GM12878 (cell line): ENCODE measurements at regions of chr10 and their contacts with region 1.

Region 1: GRCh38 chr10:50577681-50578350 is 45.9 kb downstream of the SGMS1 start:
- DNase-seq: no peak
- ATAC-seq: peak; percentile 52
- H3K4me3 ChIP-seq: no peak overlapping the region
- H3K27ac ChIP-seq: no peak overlapping the region
- H3K4me1 ChIP-seq: no peaks in the 10 kb centered on the region
- H3K27me3 ChIP-seq: no peaks in the 10 kb centered on the region
- CTCF ChIP-seq: no peak
- EP300 ChIP-seq: no peak
- POLR2A ChIP-seq: no peak
- RAD21 ChIP-seq: no peak

Region 2: GRCh38 chr10:50426485-50426884 is 151.3 kb before region 1 on chr10:
- CTCF ChIA-PET with region 1: no interaction called
- POLR2A ChIA-PET with region 1: no interaction called
- RAD21 ChIA-PET with region 1: no interaction called
- SMC1A ChIA-PET with region 1: no interaction called
- in situ Hi-C with region 1: no loop called
- intact Hi-C with region 1: no loop called
- DNase-seq: peak; percentile 56
- ATAC-seq: peak; percentile 81
- H3K4me3 ChIP-seq: no peak overlapping the region
- H3K27ac ChIP-seq: no peak overlapping the region
- H3K4me1 ChIP-seq: peaks cover 23% of the 10 kb centered on the region
- H3K27me3 ChIP-seq: no peaks in the 10 kb centered on the region
- CTCF ChIP-seq: no peak
- EP300 ChIP-seq: no peak
- POLR2A ChIP-seq: no peak
- RAD21 ChIP-seq: no peak

Region 3: GRCh38 chr10:50567384-50567783 is 10.4 kb before region 1 on chr10:
- CTCF ChIA-PET with region 1: interaction called, 3 read pairs
- POLR2A ChIA-PET with region 1: interaction called, 3 read pairs
- RAD21 ChIA-PET with region 1: no interaction called
- SMC1A ChIA-PET with region 1: interaction called, 19 read pairs
- in situ Hi-C with region 1: no loop called
- intact Hi-C with region 1: no loop called
- DNase-seq: no peak
- ATAC-seq: no peak
- H3K4me3 ChIP-seq: no peak overlapping the region
- H3K27ac ChIP-seq: no peak overlapping the region
- H3K4me1 ChIP-seq: no peaks in the 10 kb centered on the region
- H3K27me3 ChIP-seq: no peaks in the 10 kb centered on the region
- CTCF ChIP-seq: no peak
- EP300 ChIP-seq: no peak
- POLR2A ChIP-seq: no peak
- RAD21 ChIP-seq: no peak

Region 4: GRCh38 chr10:50832171-50832751 is 254.4 kb after region 1 on chr10:
- CTCF ChIA-PET with region 1: no interaction called
- POLR2A ChIA-PET with region 1: no interaction called
- RAD21 ChIA-PET with region 1: no interaction called
- SMC1A ChIA-PET with region 1: no interaction called
- in situ Hi-C with region 1: no loop called
- intact Hi-C with region 1: no loop called
- DNase-seq: no peak
- ATAC-seq: no peak
- H3K4me3 ChIP-seq: no peak overlapping the region
- H3K27ac ChIP-seq: no peak overlapping the region
- H3K4me1 ChIP-seq: no peaks in the 10 kb centered on the region
- H3K27me3 ChIP-seq: no peaks in the 10 kb centered on the region
- CTCF ChIP-seq: no peak
- EP300 ChIP-seq: no peak
- POLR2A ChIP-seq: no peak
- RAD21 ChIP-seq: no peak